H1 (cell line): ENCODE measurements at regions of chr1 and their contacts with region 1.

Region 1: GRCh38 chr1:156456622-156457465 is 43.7 kb downstream of the MEF2D start:
- DNase-seq: peak; percentile 95 to 98
- H3K4me3 ChIP-seq: peak overlapping the region; percentile 57 to 83 (median 69)
- H3K27ac ChIP-seq: peak overlapping the region; percentile 77
- H3K4me1 ChIP-seq: peaks cover 0 to 5% (median under 1%) of the 10 kb centered on the region in 4 experiments; a peak in 2 of 7 replicates
- H3K27me3 ChIP-seq: no peaks in the 10 kb centered on the region
- CTCF ChIP-seq: no peak
- EP300 ChIP-seq: no peak
- POLR2A ChIP-seq: peak; percentile 47 to 87
- RAD21 ChIP-seq: no peak

Region 2: GRCh38 chr1:156471496-156472490 is 14.9 kb after region 1 on chr1:
- CTCF ChIA-PET with region 1: interaction called, 62 read pairs
- POLR2A ChIA-PET with region 1: interaction called, 11 read pairs
- DNase-seq: no peak
- H3K4me3 ChIP-seq: no peak overlapping the region
- H3K27ac ChIP-seq: no peak overlapping the region
- H3K4me1 ChIP-seq: peaks cover 0 to 2% (median under 1%) of the 10 kb centered on the region in 4 experiments; a peak in 3 of 7 replicates
- H3K27me3 ChIP-seq: no peaks in the 10 kb centered on the region; a peak in 1 of 7 replicates
- CTCF ChIP-seq: no peak
- EP300 ChIP-seq: no peak
- POLR2A ChIP-seq: no peak
- RAD21 ChIP-seq: no peak

Region 3: DNA sequence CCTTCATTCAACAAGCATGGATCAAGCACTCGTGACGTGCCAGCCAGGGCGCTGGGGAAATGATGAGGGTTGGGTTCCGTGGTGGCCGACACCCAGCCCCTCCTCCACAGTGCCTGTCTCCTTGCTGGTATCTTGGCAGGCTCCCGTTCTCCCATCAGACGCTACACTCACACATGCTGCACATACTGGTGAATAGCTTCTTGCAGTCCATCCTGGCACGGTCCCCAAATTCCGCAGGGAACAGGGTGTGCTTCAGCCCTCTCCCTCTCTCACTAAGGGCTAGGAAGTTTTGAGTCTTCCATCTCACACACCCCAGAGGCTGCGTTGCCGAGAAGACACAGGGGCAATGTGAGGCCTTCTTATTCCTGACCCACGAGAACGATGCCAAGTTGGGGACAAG is 53.9 kb after region 1 on chr1:
- CTCF ChIA-PET with region 1: interaction called, 12 read pairs
- POLR2A ChIA-PET with region 1: no interaction called
- DNase-seq: no peak
- H3K4me3 ChIP-seq: no peak overlapping the region
- H3K27ac ChIP-seq: no peak overlapping the region
- H3K4me1 ChIP-seq: peaks cover 0 to 11% (median 4%) of the 10 kb centered on the region in 4 experiments; a peak in 3 of 7 replicates
- H3K27me3 ChIP-seq: no peaks in the 10 kb centered on the region
- CTCF ChIP-seq: no peak
- EP300 ChIP-seq: no peak
- POLR2A ChIP-seq: no peak
- RAD21 ChIP-seq: no peak